CD4-positive, alpha-beta T cell (primary cell): ENCODE measurements at regions of chr19 and their contacts with region 1.

Region 1: DNA sequence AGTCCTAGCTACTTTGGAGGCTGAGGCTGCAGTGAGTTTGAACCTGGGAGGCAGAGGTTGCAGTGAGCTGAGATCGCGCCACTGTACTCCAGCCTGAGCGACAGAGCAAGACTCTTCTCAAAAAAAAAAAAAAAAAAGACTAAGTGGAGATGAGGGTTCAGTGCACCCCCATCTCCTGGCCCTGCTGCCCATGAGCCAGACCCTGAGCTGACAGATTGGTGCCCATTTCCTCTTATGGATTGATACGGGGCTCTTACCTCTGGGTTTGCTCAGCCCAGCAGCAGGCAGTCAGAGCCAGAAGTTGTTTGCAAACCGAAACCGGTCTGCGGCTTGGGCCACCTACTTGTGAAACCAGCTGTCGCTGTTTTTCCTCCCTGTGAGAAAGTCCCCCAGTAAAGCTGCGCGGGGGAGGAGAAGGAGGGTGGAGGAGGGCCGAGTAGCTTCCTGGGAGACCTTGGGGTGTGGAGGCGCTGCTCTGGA is 36.9 kb downstream of the ARRDC2 start:
- DNase-seq: peak; percentile 68 to 95 (median 79)
- ATAC-seq: peak; percentile 95
- H3K4me3 ChIP-seq: peak overlapping the region; percentile 53
- H3K4me3 Mint-ChIP-seq: peak overlapping the region; percentile 79
- H3K27ac ChIP-seq: peak overlapping the region; percentile 56 to 67
- H3K27ac Mint-ChIP-seq: peak overlapping the region; percentile 92
- H3K4me1 ChIP-seq: peaks cover 34% of the 10 kb centered on the region
- H3K4me1 Mint-ChIP-seq: peaks cover 36% of the 10 kb centered on the region
- H3K27me3 ChIP-seq: no peaks in the 10 kb centered on the region
- H3K27me3 Mint-ChIP-seq: no peaks in the 10 kb centered on the region
- CTCF ChIP-seq: no peak

Region 2: GRCh38 chr19:18013210-18014111 is 31.4 kb before region 1 on chr19:
- CTCF ChIA-PET with region 1: no interaction called
- POLR2A ChIA-PET with region 1: interaction called, 30 read pairs
- intact Hi-C with region 1: no loop called
- DNase-seq: peak in 4 of 14 experiments; percentile 27 to 60 (median 52)
- ATAC-seq: peak; percentile 22
- H3K4me3 ChIP-seq: no peak overlapping the region
- H3K4me3 Mint-ChIP-seq: peak overlapping the region; percentile 81
- H3K27ac ChIP-seq: peak overlapping the region; percentile 74 to 78
- H3K27ac Mint-ChIP-seq: peak overlapping the region; percentile 97
- H3K4me1 ChIP-seq: peaks cover 79% of the 10 kb centered on the region
- H3K4me1 Mint-ChIP-seq: peaks cover 67% of the 10 kb centered on the region
- H3K27me3 ChIP-seq: no peaks in the 10 kb centered on the region
- H3K27me3 Mint-ChIP-seq: no peaks in the 10 kb centered on the region
- CTCF ChIP-seq: no peak

Region 3: DNA sequence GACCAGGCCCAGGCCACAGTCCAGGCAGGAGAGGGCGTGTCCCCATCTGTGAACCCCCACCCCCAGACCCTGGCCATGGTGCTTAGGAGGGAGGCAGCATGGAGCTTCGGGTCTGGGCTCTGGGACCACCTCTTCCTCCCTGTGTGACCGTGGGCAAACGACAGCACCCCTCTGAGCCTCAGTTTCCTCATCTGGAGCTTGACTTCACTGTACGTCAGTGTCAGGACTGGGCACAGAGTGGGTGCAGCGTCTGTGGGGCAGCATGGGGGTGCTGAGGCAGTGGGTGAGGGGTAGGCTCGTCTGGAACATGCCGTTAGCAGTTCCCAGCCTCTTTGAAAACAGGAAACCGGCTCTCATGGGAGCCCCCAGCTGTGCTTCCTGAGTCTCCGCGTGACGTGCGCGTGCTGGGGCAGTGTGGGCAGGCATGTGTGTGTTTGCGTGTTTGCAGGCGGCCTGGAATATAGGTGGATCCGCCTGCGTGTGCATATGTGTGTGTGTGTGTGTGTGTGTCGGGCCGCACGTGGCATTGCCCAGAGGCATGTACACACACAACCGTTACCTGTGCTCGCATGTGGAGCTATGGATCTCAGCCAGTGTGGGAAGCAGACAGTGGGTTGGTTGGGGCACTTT is 21.1 kb before region 1 on chr19:
- CTCF ChIA-PET with region 1: interaction called, 4 read pairs
- POLR2A ChIA-PET with region 1: interaction called, 35 read pairs
- intact Hi-C with region 1: loop called (anchors 2 kb)
- DNase-seq: peak; percentile 49 to 95 (median 79)
- ATAC-seq: peak; percentile 84
- H3K4me3 ChIP-seq: no peak overlapping the region
- H3K4me3 Mint-ChIP-seq: peak overlapping the region; percentile 79
- H3K27ac ChIP-seq: peak overlapping the region; percentile 85 to 87
- H3K27ac Mint-ChIP-seq: peak overlapping the region; percentile 94
- H3K4me1 ChIP-seq: peaks cover 56% of the 10 kb centered on the region
- H3K4me1 Mint-ChIP-seq: peaks cover 57% of the 10 kb centered on the region
- H3K27me3 ChIP-seq: no peaks in the 10 kb centered on the region
- H3K27me3 Mint-ChIP-seq: no peaks in the 10 kb centered on the region
- CTCF ChIP-seq: no peak

Region 4: GRCh38 chr19:18029617-18030338 is 15.1 kb before region 1 on chr19:
- CTCF ChIA-PET with region 1: interaction called, 3 read pairs
- POLR2A ChIA-PET with region 1: interaction called, 35 read pairs
- intact Hi-C with region 1: loop called in 1 of 2 experiments (anchors 2 kb)
- DNase-seq: peak in 2 of 14 experiments; percentile 27 to 28
- ATAC-seq: no peak
- H3K4me3 ChIP-seq: no peak overlapping the region
- H3K4me3 Mint-ChIP-seq: no peak overlapping the region
- H3K27ac ChIP-seq: no peak overlapping the region
- H3K27ac Mint-ChIP-seq: no peak overlapping the region
- H3K4me1 ChIP-seq: peaks cover 14% of the 10 kb centered on the region
- H3K4me1 Mint-ChIP-seq: peaks cover 19% of the 10 kb centered on the region
- H3K27me3 ChIP-seq: no peaks in the 10 kb centered on the region
- H3K27me3 Mint-ChIP-seq: no peaks in the 10 kb centered on the region
- CTCF ChIP-seq: no peak

Region 5: GRCh38 chr19:18203863-18204393 is 159.1 kb after region 1 on chr19 and contains the start of gene RAB3A:
- CTCF ChIA-PET with region 1: no interaction called
- POLR2A ChIA-PET with region 1: no interaction called
- intact Hi-C with region 1: no loop called
- DNase-seq: peak; percentile 98 to 100 (median 99)
- ATAC-seq: peak; percentile 87
- H3K4me3 ChIP-seq: peak within 1 kb of the TSS; percentile 89
- H3K4me3 Mint-ChIP-seq: peak within 1 kb of the TSS; percentile 96
- H3K27ac ChIP-seq: peak within 1 kb of the TSS; percentile 8 to 56
- H3K27ac Mint-ChIP-seq: peak within 1 kb of the TSS; percentile 91
- H3K4me1 ChIP-seq: peaks cover 33% of the 10 kb centered on the region
- H3K4me1 Mint-ChIP-seq: peaks cover 22% of the 10 kb centered on the region
- H3K27me3 ChIP-seq: no peaks in the 10 kb centered on the region
- H3K27me3 Mint-ChIP-seq: peaks cover 6% of the 10 kb centered on the region
- CTCF ChIP-seq: no peak
- total RNA-seq, gene RAB3A: 28.9 to 31.2 TPM